ENCODE measurements at regions of chr1 and their contacts with region 1.

Region 1: DNA sequence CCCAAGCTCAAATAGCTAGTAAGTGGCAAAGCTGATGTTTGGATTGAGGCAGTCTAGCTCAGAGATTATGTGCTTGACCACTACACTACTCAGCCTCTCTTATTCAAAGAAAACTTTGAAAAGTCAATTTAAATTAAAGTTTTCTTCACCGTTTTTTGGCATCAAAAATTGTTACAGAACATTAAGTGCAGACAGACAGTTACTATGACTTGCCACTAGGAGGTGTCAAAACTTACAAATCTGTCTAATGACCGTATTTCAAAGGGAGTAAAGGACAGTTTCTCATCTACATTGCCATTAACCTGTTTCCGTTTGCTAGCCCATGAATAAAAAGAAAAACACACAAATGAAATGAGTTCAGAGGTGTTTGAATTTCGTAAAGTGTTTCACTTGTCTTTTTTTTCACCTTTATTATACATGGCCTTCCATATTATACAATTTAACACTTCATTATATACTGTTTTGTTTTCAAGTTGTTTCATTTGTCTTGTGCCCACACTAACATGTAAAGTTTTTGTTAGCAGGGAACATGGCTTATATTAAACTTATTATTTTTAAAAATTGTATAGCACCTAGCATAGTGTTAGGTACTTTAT is 57.4 kb upstream of the MTF2 start:
- DNase-seq: peak in 3 of 14 experiments; percentile 68 to 71 (median 69)
- ATAC-seq: peak; percentile 85
- H3K4me3 ChIP-seq: no peak overlapping the region
- H3K4me3 Mint-ChIP-seq: no peak overlapping the region
- H3K27ac ChIP-seq: no peak overlapping the region
- H3K27ac Mint-ChIP-seq: no peak overlapping the region
- H3K4me1 ChIP-seq: no peaks in the 10 kb centered on the region
- H3K4me1 Mint-ChIP-seq: peaks cover 5% of the 10 kb centered on the region
- H3K27me3 ChIP-seq: no peaks in the 10 kb centered on the region
- H3K27me3 Mint-ChIP-seq: peaks cover 3% of the 10 kb centered on the region
- CTCF ChIP-seq: peak; percentile 90

Region 2: GRCh38 chr1:92721886-92722285 is 299.8 kb before region 1 on chr1:
- CTCF ChIA-PET with region 1: no interaction called
- POLR2A ChIA-PET with region 1: no interaction called
- intact Hi-C with region 1: no loop called
- DNase-seq: no peak
- ATAC-seq: no peak
- H3K4me3 ChIP-seq: no peak overlapping the region
- H3K4me3 Mint-ChIP-seq: no peak overlapping the region
- H3K27ac ChIP-seq: no peak overlapping the region
- H3K27ac Mint-ChIP-seq: no peak overlapping the region
- H3K4me1 ChIP-seq: no peaks in the 10 kb centered on the region
- H3K4me1 Mint-ChIP-seq: no peaks in the 10 kb centered on the region
- H3K27me3 ChIP-seq: no peaks in the 10 kb centered on the region
- H3K27me3 Mint-ChIP-seq: peaks cover 10% of the 10 kb centered on the region
- CTCF ChIP-seq: no peak

Region 3: GRCh38 chr1:92960395-92961130 is 61.1 kb before region 1 on chr1:
- CTCF ChIA-PET with region 1: no interaction called
- POLR2A ChIA-PET with region 1: no interaction called
- intact Hi-C with region 1: no loop called
- DNase-seq: peak; percentile 44 to 90 (median 57)
- ATAC-seq: peak; percentile 53
- H3K4me3 ChIP-seq: peak overlapping the region; percentile 88
- H3K4me3 Mint-ChIP-seq: peak overlapping the region; percentile 96
- H3K27ac ChIP-seq: peak overlapping the region; percentile 85 to 99
- H3K27ac Mint-ChIP-seq: peak overlapping the region; percentile 99
- H3K4me1 ChIP-seq: peaks cover 66% of the 10 kb centered on the region
- H3K4me1 Mint-ChIP-seq: peaks cover 43% of the 10 kb centered on the region
- H3K27me3 ChIP-seq: no peaks in the 10 kb centered on the region
- H3K27me3 Mint-ChIP-seq: no peaks in the 10 kb centered on the region
- CTCF ChIP-seq: peak; percentile 78

Region 4: GRCh38 chr1:93042187-93043056 is 20.8 kb after region 1 on chr1:
- CTCF ChIA-PET with region 1: interaction called, 3 read pairs
- POLR2A ChIA-PET with region 1: interaction called, 5 read pairs
- intact Hi-C with region 1: loop called in 1 of 2 experiments (anchors 1 kb)
- DNase-seq: peak in 6 of 14 experiments; percentile 2 to 93 (median 62)
- ATAC-seq: peak; percentile 98
- H3K4me3 ChIP-seq: peak overlapping the region; percentile 45
- H3K4me3 Mint-ChIP-seq: peak overlapping the region; percentile 66
- H3K27ac ChIP-seq: peak overlapping the region; percentile 75 to 85
- H3K27ac Mint-ChIP-seq: peak overlapping the region; percentile 84
- H3K4me1 ChIP-seq: peaks cover 10% of the 10 kb centered on the region
- H3K4me1 Mint-ChIP-seq: peaks cover 16% of the 10 kb centered on the region
- H3K27me3 ChIP-seq: no peaks in the 10 kb centered on the region
- H3K27me3 Mint-ChIP-seq: no peaks in the 10 kb centered on the region
- CTCF ChIP-seq: no peak

Region 5: DNA sequence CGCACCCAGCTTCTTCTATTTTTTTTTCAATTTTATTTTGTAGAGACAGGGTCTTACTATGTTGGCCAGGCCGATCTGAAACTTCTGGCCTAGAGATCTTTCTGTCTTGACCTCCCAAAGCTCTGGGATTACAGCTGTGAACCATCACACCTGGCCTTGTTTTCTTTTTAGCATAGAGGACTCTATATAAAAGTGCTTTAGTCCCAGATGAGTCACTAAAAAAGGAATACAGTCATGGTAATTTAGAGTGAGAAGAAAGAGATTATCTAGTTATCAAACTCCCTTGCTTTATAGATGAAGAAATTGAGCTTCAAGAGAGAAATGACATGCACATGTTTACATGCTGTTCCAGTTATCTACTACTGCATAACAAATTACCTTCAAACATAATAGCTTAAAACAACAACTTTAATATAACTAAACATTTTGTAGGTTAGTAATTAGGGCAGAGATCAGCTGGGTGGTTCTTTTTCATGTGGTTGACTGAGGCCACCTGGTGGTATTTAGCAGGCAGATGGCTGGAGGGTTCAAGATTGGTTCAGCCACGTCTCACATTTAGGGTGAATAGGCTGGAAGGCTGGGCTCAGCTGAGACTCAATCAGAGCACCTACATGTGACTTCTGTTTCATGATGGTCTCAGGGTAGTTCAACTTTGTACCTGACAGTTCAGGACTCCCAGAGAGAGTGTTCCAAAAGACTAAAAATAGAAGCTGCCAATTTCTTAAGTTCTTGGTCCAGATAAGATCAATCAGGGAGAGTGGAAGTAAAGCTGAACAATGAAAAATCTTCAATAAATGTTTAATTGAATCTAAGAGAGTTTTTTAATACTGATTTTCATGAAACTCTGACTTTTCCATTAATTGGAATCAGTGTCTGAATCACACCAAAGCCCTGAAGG is 40.5 kb after region 1 on chr1:
- CTCF ChIA-PET with region 1: interaction called, 17 read pairs
- POLR2A ChIA-PET with region 1: interaction called, 4 read pairs
- intact Hi-C with region 1: loop called (anchors 1 kb)
- DNase-seq: peak in 12 of 14 experiments; percentile 14 to 74 (median 28)
- ATAC-seq: peak; percentile 71
- H3K4me3 ChIP-seq: no peak overlapping the region
- H3K4me3 Mint-ChIP-seq: no peak overlapping the region
- H3K27ac ChIP-seq: no peak overlapping the region
- H3K27ac Mint-ChIP-seq: no peak overlapping the region
- H3K4me1 ChIP-seq: peaks cover 3% of the 10 kb centered on the region
- H3K4me1 Mint-ChIP-seq: no peaks in the 10 kb centered on the region
- H3K27me3 ChIP-seq: peaks cover 0 to 2% of the 10 kb centered on the region in 2 experiments
- H3K27me3 Mint-ChIP-seq: peaks cover 4% of the 10 kb centered on the region
- CTCF ChIP-seq: peak; percentile 53

Region 6: DNA sequence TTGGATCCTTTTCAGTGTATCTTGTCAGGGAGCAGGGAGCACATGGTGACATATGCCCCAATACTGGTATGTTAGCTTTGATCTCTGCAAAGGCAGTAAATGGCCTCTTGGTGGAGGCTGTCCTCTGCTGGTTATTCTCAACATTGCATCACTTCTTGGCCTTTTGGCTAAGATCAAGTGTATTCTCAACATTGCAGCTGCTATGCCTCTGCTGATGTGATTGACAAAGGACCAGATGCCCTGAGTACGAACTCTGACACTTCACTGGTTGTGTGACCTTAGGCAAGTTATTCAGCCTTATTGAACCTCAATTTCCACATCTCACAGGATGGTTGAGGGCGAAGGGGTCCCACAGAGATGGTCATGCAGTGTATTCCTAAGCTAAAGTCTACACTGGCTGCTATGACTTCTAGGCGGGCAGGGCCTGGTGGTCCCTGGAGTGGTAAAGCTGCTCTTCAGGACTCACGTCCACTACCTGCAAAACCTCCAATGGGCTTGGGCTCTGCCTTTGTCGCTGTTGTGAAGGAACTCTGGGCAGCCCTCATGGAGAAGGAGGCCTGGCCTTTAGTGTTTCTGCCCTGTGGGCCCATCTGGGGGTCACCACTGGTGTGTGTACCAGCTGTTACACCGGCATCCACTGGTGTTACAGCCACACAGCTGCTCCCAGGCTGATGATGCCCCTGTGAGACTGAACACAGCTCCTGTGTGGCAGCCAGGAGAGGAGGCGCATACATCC is 792.6 kb after region 1 on chr1:
- CTCF ChIA-PET with region 1: no interaction called
- POLR2A ChIA-PET with region 1: no interaction called
- intact Hi-C with region 1: loop called in 1 of 2 experiments (anchors 10 kb)
- DNase-seq: peak in 9 of 14 experiments; percentile 8 to 72 (median 25)
- ATAC-seq: peak; percentile 31
- H3K4me3 ChIP-seq: no peak overlapping the region
- H3K4me3 Mint-ChIP-seq: no peak overlapping the region
- H3K27ac ChIP-seq: no peak overlapping the region
- H3K27ac Mint-ChIP-seq: no peak overlapping the region
- H3K4me1 ChIP-seq: peaks cover 17% of the 10 kb centered on the region
- H3K4me1 Mint-ChIP-seq: peaks cover 22% of the 10 kb centered on the region
- H3K27me3 ChIP-seq: no peaks in the 10 kb centered on the region
- H3K27me3 Mint-ChIP-seq: no peaks in the 10 kb centered on the region
- CTCF ChIP-seq: peak; percentile 71

Region 7: GRCh38 chr1:94284476-94284875 is 1262.8 kb after region 1 on chr1:
- CTCF ChIA-PET with region 1: no interaction called
- POLR2A ChIA-PET with region 1: no interaction called
- intact Hi-C with region 1: no loop called
- DNase-seq: no peak
- ATAC-seq: no peak
- H3K4me3 ChIP-seq: no peak overlapping the region
- H3K4me3 Mint-ChIP-seq: no peak overlapping the region
- H3K27ac ChIP-seq: no peak overlapping the region
- H3K27ac Mint-ChIP-seq: no peak overlapping the region
- H3K4me1 ChIP-seq: no peaks in the 10 kb centered on the region
- H3K4me1 Mint-ChIP-seq: no peaks in the 10 kb centered on the region
- H3K27me3 ChIP-seq: no peaks in the 10 kb centered on the region
- H3K27me3 Mint-ChIP-seq: peaks cover 37% of the 10 kb centered on the region
- CTCF ChIP-seq: no peak